Mammary epithelial cell (primary cell): ENCODE measurements at regions of chr1 and their contacts with region 1.

Region 1: DNA sequence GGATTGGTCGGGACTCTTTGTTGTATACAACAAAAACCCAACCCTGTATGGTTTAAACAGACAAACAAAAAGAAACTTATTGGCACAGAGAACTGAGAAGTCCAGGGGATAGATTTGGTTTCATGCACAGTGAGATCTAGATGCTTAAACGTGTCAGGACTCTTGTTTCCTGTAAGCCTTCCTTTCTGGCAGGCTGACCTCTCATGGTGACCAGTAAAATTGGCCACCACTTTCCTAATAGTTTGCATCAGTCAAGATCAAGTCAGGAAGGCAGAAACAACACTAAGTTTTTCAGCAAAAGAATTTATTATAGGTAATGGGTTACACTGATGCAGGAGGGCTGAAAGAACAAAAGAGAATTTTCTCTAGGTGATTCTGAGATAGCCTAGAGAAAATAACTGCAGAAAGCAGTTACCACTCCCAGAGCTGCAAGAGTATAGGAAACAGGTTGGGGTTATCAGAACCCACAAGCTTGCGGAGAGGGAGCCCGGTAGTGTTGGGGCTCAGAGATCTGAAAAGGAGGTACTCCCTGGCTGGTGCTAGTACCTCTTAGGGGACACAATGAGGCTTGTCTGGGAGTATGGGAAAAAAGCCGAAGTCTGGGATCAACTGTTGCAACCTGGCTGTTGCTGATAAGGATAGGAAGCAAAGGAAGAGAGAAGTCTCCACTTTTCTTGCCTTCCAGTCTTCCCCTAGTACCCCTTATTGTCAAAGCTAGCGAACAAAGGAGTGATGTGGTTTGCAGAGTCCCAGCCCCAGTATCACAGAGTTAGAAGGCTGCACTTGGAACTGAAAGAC is 21.4 kb downstream of the CITED4 start:
- DNase-seq: no peak
- H3K4me3 ChIP-seq: no peak overlapping the region
- H3K27ac ChIP-seq: no peak overlapping the region
- H3K4me1 ChIP-seq: no peaks in the 10 kb centered on the region
- H3K27me3 ChIP-seq: no peaks in the 10 kb centered on the region
- CTCF ChIP-seq: no peak

Region 2: DNA sequence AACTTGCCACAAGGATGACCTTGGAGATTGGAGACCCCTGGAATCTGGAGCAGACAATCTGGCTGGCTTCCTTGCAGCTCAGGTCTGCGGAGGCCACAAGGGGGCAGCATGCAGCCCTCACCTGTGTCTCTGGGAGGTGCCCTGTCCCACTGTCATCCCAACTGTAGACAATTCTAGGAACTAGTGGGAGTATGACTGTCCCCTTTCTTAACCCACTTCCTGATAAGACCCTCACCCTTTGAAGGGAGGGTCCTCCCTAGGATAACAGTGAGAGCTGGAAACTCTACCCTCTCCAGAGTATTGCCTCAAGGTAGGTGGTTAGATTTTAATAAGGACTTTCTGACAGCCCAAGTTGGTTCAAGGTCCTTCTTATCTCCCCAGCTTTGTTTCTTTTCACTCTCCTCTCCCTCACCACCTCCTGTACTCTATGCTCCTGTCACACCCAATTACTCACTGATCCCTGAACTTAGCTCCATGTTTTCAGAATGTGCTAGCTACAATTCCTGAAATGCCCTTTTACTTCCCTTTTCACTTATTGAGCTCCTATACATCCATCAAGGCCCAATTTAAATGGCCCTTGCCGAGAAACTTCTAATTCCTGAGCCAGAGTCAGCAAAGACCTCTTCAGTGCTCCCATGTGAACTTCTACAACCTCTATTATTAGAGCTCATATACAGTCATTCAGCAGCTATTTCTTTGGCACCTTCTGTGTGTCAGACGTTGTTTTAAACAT is 66.3 kb before region 1 on chr1:
- CTCF ChIA-PET with region 1: no interaction called
- dilution Hi-C with region 1: no loop called
- in situ Hi-C with region 1: no loop called
- intact Hi-C with region 1: loop called (anchors 2 kb)
- DNase-seq: no peak
- H3K4me3 ChIP-seq: no peak overlapping the region
- H3K27ac ChIP-seq: no peak overlapping the region
- H3K4me1 ChIP-seq: peaks cover 13% of the 10 kb centered on the region
- H3K27me3 ChIP-seq: no peaks in the 10 kb centered on the region
- CTCF ChIP-seq: peak; percentile 83 to 84

Region 3: DNA sequence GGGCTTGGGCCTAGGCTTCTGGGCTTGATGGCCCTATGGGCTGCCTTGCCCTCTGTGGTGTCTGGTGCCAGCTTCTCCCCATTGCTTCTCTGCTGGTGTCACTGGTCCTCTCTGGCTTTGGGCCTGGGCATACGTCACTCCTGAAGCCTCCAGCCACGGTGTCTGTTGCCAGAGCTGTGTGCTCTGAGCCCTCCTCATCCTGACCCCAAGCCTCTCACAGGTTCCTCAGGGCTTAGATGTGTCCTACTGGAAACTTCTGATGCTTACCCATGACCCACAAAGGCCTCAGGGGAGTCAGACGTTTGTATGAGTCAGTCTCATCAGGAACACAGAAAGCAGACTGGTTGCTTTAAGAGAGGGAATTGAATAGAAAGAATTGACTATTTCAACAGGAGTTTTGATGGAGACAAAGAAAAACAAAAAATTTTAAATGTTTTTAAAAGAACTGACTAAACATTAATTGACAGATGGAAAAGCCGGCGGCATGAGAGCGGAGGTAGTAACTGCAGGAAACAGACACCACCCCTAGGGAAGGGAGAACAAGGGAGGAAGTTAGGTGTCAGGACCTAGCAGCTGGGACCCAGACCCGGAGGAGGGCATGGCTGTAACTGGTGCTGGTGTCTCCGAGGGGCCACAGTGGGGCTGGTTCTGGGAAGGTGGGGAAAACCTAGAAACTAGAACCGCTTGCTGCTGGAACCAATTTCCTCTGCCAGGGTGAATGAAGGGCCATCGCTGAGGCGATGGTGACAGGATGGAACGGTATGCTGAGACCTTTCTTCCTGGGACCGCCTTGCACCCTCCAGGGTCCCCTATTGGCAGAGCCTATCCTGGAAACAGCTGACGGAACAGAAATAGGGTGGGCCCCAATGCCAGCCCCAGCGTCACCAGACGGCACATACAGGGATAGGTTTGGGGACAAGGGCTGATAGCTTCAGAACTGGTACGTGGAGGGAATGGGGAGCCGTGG is 61.4 kb after region 1 on chr1:
- CTCF ChIA-PET with region 1: no interaction called
- dilution Hi-C with region 1: no loop called
- in situ Hi-C with region 1: no loop called
- intact Hi-C with region 1: no loop called
- DNase-seq: peak; percentile 91
- H3K4me3 ChIP-seq: no peak overlapping the region
- H3K27ac ChIP-seq: peak overlapping the region; percentile 73
- H3K4me1 ChIP-seq: peaks cover 53% of the 10 kb centered on the region
- H3K27me3 ChIP-seq: no peaks in the 10 kb centered on the region
- CTCF ChIP-seq: no peak